Breast epithelium (tissue), 4 donors: ENCODE measurements at regions of chr19 and their contacts with region 1.

Region 1: GRCh38 chr19:51931941-51932340 is 4.7 kb downstream of the ZNF613 start:
- DNase-seq: no peak
- H3K4me3 ChIP-seq: no peak overlapping the region
- H3K27ac ChIP-seq: no peak overlapping the region
- H3K4me1 ChIP-seq: no peaks in the 10 kb centered on the region
- H3K27me3 ChIP-seq: no peaks in the 10 kb centered on the region
- CTCF ChIP-seq: no peak
- POLR2A ChIP-seq: no peak

Region 2: DNA sequence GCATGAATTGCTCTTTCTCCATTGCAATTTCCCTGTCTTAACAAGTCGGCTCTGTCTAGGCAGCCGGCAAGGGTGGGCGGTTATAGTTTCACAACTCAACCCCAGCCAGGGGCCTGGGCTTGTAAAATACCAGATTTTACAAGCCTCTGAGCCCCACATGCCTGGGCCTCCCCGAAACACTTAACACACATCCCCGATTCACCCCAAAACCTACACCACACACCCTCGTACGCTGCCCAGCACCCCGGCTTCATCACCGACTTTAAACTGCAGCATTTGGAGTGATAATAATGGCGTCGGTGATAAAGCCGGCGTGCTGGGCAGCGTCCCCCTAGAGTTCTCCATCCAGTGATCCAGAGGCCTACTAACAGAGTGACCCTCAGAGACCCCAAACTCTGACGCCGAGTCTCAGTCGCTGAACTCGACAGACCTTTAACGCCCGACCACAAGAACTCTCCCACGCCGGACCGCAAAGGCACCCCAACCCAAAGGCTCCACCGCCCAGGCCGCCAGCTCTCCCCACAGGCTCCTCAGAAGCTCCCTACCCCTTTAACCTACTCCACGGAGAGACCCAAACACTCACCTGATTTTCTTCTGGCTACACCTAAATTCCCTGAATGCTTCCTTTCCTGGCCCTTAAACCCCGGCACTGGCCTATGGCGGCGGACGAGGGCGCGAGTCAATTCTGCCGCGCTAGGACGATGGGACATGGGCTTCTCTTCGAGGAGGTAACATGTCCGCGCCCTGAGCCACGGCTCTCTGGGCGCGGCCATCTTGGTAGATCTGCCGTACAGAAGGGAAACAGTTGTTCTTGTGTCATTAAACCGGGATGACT is 27.4 kb before region 1 on chr19 and contains the start of gene ZNF649:
- intact Hi-C with region 1: loop called (anchors 2 kb)
- DNase-seq: peak; percentile 67 to 76
- H3K4me3 ChIP-seq: peak within 1 kb of the TSS; percentile 67 to 81 (median 81)
- H3K27ac ChIP-seq: peak within 1 kb of the TSS; percentile 87 to 90
- H3K4me1 ChIP-seq: no peaks in the 10 kb centered on the region
- H3K27me3 ChIP-seq: peaks cover 0 to 6% of the 10 kb centered on the region in 2 donors
- CTCF ChIP-seq: no peak
- POLR2A ChIP-seq: peak; percentile 25
- total RNA-seq, gene ZNF649: 11.7 to 22.8 (median 15.4) TPM